ENCODE measurements at regions of chr2 and their contacts with region 1.

Region 1: DNA sequence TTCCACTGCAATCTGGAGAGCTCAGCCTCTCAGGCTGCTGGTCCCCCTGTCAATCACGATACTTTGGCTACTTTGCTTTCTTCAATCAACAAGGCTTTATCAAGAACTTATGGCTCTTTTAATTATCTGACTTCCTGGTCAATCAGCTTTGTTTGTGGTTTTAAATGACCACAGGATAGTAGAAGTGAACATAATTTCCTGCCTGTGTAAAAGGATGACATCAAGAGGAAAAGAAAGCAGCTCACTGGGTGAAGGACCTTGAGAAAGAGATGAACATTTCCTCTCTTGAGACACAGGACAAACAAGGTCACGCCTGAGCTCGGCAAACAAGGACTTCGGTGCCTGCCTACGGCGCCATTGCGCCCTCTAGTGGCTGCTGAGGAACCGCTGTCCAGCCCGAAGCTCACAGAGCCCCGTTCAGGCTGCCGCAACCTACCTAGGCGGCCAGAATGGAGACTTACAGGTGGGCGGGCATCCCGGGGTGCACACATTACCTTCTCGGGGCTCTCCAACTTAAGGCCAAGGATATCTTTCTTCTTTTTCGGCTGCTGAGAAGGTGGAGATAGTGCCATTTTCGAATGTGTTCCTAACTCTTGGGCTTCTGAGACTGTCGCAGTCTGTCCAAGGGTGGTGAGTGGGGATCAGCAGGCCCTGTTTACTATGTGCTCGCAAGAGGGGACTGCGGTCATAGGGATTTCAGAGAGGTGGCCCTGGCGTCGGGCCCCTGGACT is 54.0 kb downstream of the IL1RL2 start:
- DNase-seq: peak; percentile 87
- H3K4me3 Mint-ChIP-seq: no peak overlapping the region
- H3K27ac Mint-ChIP-seq: peak overlapping the region; percentile 3
- H3K4me1 Mint-ChIP-seq: peaks cover 32% of the 10 kb centered on the region
- H3K27me3 Mint-ChIP-seq: no peaks in the 10 kb centered on the region

Region 2: DNA sequence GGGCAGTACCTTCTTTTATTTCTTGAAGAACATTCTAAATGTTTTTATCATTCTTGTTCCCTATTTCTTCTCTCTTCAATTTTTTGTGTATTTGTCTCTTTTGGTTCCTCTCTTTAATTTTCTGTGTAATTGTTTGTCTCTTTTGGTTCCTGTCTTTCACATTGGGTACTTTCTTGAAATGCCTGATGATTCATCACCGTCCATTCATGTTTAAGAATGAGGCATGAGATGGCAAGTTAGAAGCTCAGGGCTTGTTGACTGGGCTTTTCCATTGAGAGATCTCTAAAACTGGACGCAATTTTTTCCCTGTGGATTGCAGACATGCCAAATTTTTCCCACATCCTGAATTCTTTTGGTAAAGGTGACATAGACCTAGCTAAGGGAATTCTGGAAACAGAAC is 282.7 kb before region 1 on chr2:
- CTCF ChIA-PET with region 1: no interaction called
- POLR2A ChIA-PET with region 1: no interaction called
- DNase-seq: no peak
- H3K4me3 Mint-ChIP-seq: no peak overlapping the region
- H3K27ac Mint-ChIP-seq: no peak overlapping the region
- H3K4me1 Mint-ChIP-seq: no peaks in the 10 kb centered on the region
- H3K27me3 Mint-ChIP-seq: no peaks in the 10 kb centered on the region

Region 3: DNA sequence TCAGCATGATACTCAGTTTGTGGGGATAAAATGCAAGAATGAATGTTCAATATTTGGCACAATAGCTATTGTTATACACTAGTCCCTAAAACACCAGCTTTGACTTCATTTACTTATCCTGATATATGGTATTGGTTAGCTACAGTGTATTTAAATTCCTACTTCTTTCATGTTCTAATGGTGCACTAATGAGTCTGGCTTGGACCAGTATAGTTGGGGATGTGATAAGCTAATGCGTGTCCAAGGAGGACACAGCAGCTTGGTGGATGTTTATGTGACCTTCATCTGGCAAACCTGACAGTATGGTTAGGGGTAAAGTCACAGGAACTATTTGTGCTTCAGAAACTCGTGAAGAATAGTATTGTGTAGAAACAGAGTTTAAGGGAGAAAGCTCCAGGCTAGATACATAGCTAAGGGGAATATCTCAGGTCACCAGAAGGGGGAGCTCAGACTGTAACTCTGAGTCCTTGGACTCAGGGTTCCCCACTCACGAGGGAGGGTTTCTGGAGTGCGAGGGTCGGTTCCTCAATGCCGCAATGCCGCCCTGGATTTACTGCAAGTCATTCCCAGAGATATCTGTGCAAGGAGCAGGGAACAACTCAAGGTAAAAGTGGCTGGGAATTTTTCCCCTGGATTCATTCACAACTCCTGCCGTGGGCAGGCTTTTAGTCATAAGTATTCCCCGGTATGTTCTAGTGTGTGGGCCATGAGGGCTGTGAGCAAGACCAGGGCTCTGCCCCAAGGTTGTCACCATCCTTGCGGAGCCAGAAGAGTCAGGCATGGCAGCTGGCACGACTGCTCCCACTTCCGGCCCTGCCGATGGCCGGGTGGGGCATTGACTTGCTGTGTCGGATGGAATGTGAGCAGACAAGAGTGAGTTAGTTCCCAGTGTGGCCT is 234.6 kb before region 1 on chr2:
- CTCF ChIA-PET with region 1: interaction called, 25 read pairs
- POLR2A ChIA-PET with region 1: no interaction called
- DNase-seq: peak; percentile 47
- H3K4me3 Mint-ChIP-seq: no peak overlapping the region
- H3K27ac Mint-ChIP-seq: no peak overlapping the region
- H3K4me1 Mint-ChIP-seq: peaks cover 14% of the 10 kb centered on the region
- H3K27me3 Mint-ChIP-seq: no peaks in the 10 kb centered on the region

Region 4: GRCh38 chr2:102190430-102191107 is 50.2 kb before region 1 on chr2:
- CTCF ChIA-PET with region 1: no interaction called
- POLR2A ChIA-PET with region 1: no interaction called
- DNase-seq: no peak
- H3K4me3 Mint-ChIP-seq: no peak overlapping the region
- H3K27ac Mint-ChIP-seq: no peak overlapping the region
- H3K4me1 Mint-ChIP-seq: peaks cover 12% of the 10 kb centered on the region
- H3K27me3 Mint-ChIP-seq: peaks cover 18% of the 10 kb centered on the region

Region 5: DNA sequence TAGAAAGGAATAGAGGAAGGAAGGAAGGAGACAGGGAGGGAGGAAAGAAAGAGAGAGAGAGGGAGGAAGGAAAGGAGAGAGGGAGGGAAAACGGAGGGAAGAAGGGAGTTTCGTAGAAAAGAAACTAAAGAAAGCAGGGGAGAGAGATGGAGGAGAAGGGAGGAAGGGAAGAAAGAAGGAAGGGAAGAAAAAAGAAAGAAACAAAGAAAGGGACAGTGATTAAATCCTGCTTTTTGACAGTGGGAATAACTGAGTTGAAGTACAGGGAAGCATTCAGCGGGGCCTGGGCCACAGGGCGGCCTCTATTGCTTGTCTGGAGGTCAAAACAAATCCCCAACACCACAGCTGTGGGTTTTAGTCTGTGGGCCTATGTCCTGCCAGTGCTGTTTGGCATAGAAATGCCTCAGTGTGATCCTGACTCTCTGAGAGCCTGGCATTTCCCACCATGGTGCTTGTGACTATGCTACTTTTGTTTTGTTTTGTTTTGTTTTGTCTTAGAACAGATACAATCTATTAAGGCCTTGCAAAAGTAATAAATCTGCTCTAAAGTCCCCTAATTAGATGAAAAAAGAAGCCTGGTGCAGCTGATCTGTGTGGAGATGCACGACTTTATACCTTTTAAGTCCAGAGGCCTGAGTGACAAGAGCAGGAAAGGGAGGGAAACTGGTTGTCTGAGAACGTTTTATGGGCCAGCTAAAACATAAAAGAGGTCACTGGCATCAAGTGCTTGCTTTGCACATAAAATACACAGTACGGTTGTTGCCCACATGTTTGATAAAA is 14.0 kb before region 1 on chr2:
- CTCF ChIA-PET with region 1: interaction called, 12 read pairs
- POLR2A ChIA-PET with region 1: no interaction called
- DNase-seq: no peak
- H3K4me3 Mint-ChIP-seq: no peak overlapping the region
- H3K27ac Mint-ChIP-seq: peak overlapping the region; percentile 89
- H3K4me1 Mint-ChIP-seq: peaks cover 49% of the 10 kb centered on the region
- H3K27me3 Mint-ChIP-seq: no peaks in the 10 kb centered on the region

Region 6: DNA sequence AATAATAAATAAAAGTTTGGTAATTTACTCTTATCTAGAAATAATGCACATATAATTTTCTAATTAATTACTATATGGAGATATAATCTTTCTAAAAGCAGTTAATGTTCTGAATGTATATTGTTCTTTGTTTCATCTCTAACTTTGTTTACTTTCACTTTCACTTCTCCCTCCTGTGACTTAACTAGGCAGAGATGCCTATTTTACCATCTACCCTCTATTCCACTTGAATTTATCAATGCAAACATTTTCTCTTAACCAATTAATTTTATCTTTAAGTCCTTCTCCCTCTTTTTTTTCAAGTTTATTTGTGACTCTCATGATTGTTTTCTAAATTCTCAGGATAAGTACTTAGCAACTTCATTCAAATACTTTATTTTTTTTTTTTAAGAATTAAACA is 15.5 kb after region 1 on chr2:
- CTCF ChIA-PET with region 1: interaction called, 44 read pairs
- POLR2A ChIA-PET with region 1: no interaction called
- DNase-seq: no peak
- H3K4me3 Mint-ChIP-seq: no peak overlapping the region
- H3K27ac Mint-ChIP-seq: peak overlapping the region; percentile 92
- H3K4me1 Mint-ChIP-seq: peaks cover 71% of the 10 kb centered on the region
- H3K27me3 Mint-ChIP-seq: no peaks in the 10 kb centered on the region

Region 7: DNA sequence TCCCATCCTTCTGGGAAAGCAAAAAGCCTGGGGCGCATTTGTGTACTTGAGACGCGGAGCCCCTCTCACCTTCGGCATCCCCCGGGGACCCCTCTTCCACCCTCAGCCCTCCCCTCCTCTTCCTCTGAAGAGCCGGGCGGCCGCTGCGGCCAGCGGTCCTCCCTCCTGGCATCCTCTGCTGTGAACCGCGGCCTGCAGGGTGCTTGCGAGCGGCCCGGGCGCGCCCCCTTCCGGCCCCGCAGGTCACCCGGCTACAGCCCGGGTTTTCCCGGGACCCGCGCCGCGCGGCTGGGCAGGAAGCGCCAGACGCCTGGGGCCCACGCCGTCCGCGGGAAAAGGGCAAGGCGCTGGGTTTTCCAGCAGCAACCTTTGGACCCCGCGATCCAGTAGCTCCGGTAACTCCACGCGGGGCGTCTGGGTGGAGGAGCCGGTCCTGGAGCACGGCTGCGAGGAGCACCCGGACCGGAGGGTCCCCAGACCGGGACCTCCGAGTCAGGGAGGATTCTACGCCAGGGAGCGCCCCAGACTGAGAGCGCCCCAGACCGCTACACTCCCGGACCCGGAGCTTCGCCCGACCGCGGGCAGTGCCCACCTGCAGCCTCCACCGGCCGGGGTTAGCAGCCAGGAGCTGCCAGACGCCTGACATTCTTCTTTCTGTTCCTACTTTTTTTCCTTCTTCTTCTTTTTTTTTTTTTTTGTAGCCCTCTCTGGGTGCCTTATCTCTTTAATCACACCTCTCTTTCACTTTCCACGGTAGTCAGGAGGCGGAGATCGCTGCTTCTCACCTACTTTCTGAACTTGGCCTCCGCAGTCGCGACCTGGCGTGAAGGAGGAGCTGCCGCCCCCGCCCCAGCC is 114.9 kb after region 1 on chr2 and contains the start of gene IL18R1:
- CTCF ChIA-PET with region 1: interaction called, 23 read pairs
- POLR2A ChIA-PET with region 1: no interaction called
- DNase-seq: peak; percentile 66
- H3K4me3 Mint-ChIP-seq: peak within 1 kb of the TSS; percentile 99
- H3K27ac Mint-ChIP-seq: peak within 1 kb of the TSS; percentile 99
- H3K4me1 Mint-ChIP-seq: peaks cover 43% of the 10 kb centered on the region
- H3K27me3 Mint-ChIP-seq: no peaks in the 10 kb centered on the region
- total RNA-seq, gene IL18R1: 19.2 to 22.1 TPM